ENCODE measurements at regions of chr19 and their contacts with region 1.

Region 1: DNA sequence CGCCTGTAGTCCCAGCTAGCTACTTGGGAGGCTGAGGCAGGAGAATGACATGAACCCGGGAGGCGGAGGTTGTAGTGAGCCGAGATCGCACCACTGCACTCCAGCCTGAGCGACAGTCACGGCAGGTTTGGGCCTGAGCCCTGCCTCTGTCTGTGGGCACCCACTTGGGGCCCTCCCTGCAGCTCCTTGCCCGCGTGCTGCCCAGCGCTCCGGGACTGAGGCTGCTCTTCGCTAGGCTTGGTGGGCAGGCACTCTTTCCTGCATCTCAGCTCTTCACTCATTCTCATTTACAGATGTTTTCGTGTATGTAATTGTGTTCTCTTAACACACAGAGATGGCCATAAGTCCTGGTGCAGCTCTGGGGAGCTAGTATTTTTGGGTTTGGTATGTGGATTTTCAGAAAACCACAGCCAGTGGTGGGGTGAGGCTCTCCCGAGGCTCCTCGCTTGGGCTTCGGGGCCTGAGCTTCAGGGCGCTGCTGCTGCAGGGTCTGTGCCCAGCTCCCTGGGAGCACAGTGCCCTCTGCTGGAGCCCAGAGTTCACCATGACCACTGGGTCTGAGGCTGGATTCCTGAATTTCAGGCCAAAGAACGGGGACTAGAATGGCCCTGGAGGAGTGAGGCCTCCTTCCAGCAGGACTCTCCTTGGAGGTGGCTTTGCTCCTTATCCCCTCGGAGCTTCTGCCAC is 15.2 kb downstream of the UPF1 start:
- DNase-seq: peak; percentile 76 to 84
- H3K4me3 ChIP-seq: no peak overlapping the region
- H3K27ac ChIP-seq: peak overlapping the region in 2 of 3 donors; percentile 3 to 7
- H3K4me1 ChIP-seq: peaks cover 15 to 64% of the 10 kb centered on the region in 2 donors
- H3K27me3 ChIP-seq: no peaks in the 10 kb centered on the region
- CTCF ChIP-seq: peak; percentile 57 to 88 (median 78)
- POLR2A ChIP-seq: no peak

Region 2: GRCh38 chr19:18450931-18451845 is 395.8 kb before region 1 on chr19:
- intact Hi-C with region 1: loop called (anchors 2 kb)
- DNase-seq: peak; percentile 84 to 88
- H3K4me3 ChIP-seq: no peak overlapping the region
- H3K27ac ChIP-seq: no peak overlapping the region
- H3K4me1 ChIP-seq: peaks cover 0 to 3% of the 10 kb centered on the region in 2 donors
- H3K27me3 ChIP-seq: no peaks in the 10 kb centered on the region
- CTCF ChIP-seq: peak; percentile 84 to 99 (median 96)
- POLR2A ChIP-seq: no peak

Region 3: GRCh38 chr19:18588611-18589379 is 258.2 kb before region 1 on chr19 and contains the start of gene REX1BD:
- intact Hi-C with region 1: loop called (anchors 5 kb)
- DNase-seq: peak; percentile 71 to 77
- H3K4me3 ChIP-seq: peak within 1 kb of the TSS; percentile 49 to 86 (median 84)
- H3K27ac ChIP-seq: peak within 1 kb of the TSS; percentile 64 to 86 (median 79)
- H3K4me1 ChIP-seq: peaks cover 9 to 16% of the 10 kb centered on the region in 2 donors
- H3K27me3 ChIP-seq: no peaks in the 10 kb centered on the region
- CTCF ChIP-seq: peak; percentile 65 to 86 (median 76)
- POLR2A ChIP-seq: peak in 1 of 2 donors; percentile 56
- total RNA-seq, gene REX1BD: 57.4 to 137 (median 101) TPM